ENCODE measurements at regions of chr4 and their contacts with region 1.

Region 1: DNA sequence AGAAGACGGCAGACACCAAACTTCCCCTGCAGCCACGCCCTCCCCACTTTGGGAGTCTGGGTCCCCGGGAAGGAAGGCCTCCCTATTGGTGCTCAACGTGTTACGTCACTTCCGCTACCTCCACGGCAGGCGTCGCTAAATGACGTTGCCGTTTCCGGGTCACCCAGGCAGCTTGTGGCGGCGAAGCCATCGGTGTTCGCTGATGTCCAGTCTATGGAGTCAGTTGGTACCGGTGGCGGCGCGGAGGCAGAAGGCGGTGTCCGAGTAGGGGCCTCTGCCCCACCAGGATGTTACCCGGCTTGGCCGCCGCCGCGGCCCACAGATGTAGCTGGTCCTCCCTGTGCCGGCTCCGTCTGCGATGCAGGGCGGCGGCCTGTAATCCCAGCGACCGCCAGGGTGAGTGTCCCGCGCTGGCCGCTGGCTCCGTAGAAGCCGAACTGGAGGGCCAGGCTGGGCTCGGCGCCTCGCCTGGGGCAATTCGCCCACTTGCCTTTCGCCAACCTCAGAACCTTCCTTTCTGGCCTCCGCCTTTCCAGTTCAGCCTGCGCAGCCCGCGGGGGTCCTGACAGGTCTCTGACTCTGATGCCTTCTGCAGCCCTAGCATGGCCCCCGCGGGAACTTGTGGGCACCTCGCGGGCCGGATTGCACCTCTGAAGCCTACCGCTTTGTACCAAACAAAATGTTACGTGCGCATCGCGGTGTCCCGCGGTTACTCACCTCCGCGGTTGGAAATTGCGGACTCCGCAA is at the start of gene SLC30A9:
- DNase-seq: peak; percentile 82
- ATAC-seq: peak; percentile 95
- H3K4me3 Mint-ChIP-seq: peak within 1 kb of the TSS; percentile 98
- H3K27ac Mint-ChIP-seq: peak within 1 kb of the TSS; percentile 95
- H3K4me1 Mint-ChIP-seq: peaks cover 29% of the 10 kb centered on the region
- H3K27me3 Mint-ChIP-seq: no peaks in the 10 kb centered on the region
- CTCF ChIP-seq: no peak
- total RNA-seq, gene SLC30A9: 29.0 and 33.4 TPM in 2 replicates

Region 2: DNA sequence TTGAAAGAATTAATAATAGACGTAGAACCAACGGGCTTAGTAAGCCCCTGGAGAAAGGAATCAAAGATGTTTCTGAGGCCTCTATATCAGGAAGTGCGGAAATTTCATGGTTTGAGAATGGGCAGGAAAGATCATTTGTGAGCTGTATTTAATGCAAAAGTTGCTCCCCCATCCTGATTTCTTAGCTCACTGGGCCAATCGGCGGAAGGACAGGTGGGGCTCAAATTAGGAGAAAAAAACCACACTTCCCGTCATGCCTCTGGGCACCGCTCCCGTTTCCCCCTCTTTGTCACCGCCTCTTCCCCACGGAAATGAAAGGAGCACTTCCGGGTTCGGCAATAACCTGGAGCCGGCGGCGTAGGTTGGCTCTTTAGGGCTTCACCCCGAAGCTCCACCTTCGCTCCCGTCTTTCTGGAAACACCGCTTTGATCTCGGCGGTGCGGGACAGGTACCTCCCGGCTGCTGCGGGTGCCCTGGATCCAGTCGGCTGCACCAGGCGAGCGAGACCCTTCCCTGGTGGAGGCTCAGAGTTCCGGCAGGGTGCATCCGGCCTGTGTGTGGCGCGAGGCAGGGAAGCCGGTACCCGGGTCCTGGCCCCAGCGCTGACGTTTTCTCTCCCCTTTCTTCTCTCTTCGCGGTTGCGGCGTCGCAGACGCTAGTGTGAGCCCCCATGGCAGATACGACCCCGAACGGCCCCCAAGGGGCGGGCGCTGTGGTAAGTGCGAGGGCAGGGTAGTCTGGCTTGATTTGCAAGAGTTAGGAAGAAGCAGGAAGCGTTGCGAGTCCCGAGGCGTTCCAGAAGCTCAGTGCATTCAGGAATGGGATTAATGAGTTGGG is 55.5 kb before region 1 on chr4 and contains the start of gene TMEM33:
- CTCF ChIA-PET with region 1: interaction called, 3 read pairs
- POLR2A ChIA-PET with region 1: interaction called, 12 read pairs
- intact Hi-C with region 1: loop called (anchors 1 kb)
- DNase-seq: peak; percentile 58
- ATAC-seq: peak; percentile 89
- H3K4me3 Mint-ChIP-seq: peak within 1 kb of the TSS; percentile 93
- H3K27ac Mint-ChIP-seq: peak within 1 kb of the TSS; percentile 50
- H3K4me1 Mint-ChIP-seq: peaks cover 31% of the 10 kb centered on the region
- H3K27me3 Mint-ChIP-seq: no peaks in the 10 kb centered on the region
- CTCF ChIP-seq: no peak
- total RNA-seq, gene TMEM33: 34.3 and 40.0 TPM in 2 replicates

Region 3: DNA sequence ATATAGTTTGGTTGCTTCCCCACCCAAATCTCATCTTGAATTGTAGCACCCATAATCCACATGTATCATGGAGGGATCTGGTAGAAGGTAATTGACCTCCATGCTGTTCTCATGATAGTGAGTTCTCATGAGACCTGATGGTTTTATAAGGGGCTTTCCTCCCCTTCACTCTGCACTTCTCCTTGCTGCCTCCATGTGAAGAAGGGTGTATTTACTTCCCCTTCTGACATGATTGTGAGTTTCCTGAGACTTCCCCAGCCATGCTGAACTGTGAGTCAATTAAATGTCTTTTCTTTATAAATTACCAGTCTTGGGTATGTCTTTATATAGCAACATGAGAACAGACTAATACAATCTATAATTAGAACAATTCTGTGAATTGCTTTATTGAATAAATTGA is 20.9 kb before region 1 on chr4:
- CTCF ChIA-PET with region 1: no interaction called
- POLR2A ChIA-PET with region 1: interaction called, 3 read pairs
- intact Hi-C with region 1: loop called (anchors 2 kb)
- DNase-seq: no peak
- ATAC-seq: peak; percentile 73
- H3K4me3 Mint-ChIP-seq: no peak overlapping the region
- H3K27ac Mint-ChIP-seq: peak overlapping the region; percentile 64
- H3K4me1 Mint-ChIP-seq: peaks cover 16% of the 10 kb centered on the region
- H3K27me3 Mint-ChIP-seq: no peaks in the 10 kb centered on the region
- CTCF ChIP-seq: no peak

Region 4: GRCh38 chr4:42167709-42168108 is 177.2 kb after region 1 on chr4:
- CTCF ChIA-PET with region 1: no interaction called
- POLR2A ChIA-PET with region 1: no interaction called
- intact Hi-C with region 1: loop called (anchors 1 kb)
- DNase-seq: no peak
- ATAC-seq: peak; percentile 97
- H3K4me3 Mint-ChIP-seq: no peak overlapping the region
- H3K27ac Mint-ChIP-seq: no peak overlapping the region
- H3K4me1 Mint-ChIP-seq: peaks cover 11% of the 10 kb centered on the region
- H3K27me3 Mint-ChIP-seq: no peaks in the 10 kb centered on the region
- CTCF ChIP-seq: no peak

Measured in activated B cell treated with CpG ODN at 0.5 μM for 24 hours (primary cell).